HEK293 (cell line): ENCODE measurements at regions of chr17 and their contacts with region 1.

Region 1: GRCh38 chr17:58417300-58418092 is at the start of gene RNF43:
- H3K4me3 ChIP-seq: peak within 1 kb of the TSS; percentile 52
- H3K27ac ChIP-seq: peak within 1 kb of the TSS; percentile 89
- H3K4me1 ChIP-seq: peaks cover 10% of the 10 kb centered on the region
- CTCF ChIP-seq: peak; percentile 98

Region 2: GRCh38 chr17:58324409-58325288 is 92.8 kb before region 1 on chr17:
- CTCF ChIA-PET with region 1: interaction called, 12 read pairs
- POLR2A ChIA-PET with region 1: interaction called, 6 read pairs
- H3K4me3 ChIP-seq: peak overlapping the region; percentile 44
- H3K27ac ChIP-seq: peak overlapping the region; percentile 12; the same call in 1 of the 2 replicates
- H3K4me1 ChIP-seq: no peaks in the 10 kb centered on the region
- CTCF ChIP-seq: no peak

Region 3: DNA sequence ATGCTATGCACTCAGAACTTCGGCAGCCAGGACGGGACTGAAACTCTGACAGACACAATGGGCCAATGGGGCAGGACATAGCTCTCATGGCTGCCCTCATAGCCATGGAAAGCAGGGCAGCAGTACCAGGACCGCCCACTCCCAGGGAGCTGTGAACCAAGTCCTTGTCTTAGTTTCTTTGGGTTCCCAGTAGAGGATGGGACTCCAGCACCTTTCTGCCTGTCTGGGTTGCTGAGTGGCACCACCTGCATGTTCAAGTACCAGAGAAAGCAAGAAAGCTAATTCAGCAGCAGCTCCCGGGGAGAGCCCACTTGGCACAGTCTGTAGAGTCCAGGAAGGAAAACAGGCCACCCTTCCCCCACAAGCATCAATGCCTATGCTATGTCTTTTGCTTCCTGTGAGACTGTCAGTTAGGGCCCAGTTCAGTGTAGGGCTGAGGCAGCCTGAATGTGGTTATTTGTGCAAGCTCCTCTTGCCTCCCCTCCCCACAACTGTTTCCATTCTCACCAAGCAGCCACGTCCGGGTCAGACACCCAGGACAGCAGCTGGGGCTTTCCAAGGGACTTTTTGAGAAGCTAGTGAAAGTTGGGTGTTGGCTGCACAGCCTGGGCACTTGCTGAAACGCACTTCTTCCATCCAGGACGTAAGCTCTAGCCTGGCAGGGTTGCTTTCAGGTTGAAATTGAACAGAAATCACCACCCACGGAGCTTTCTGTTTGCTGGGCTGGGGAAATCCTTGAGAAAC is 73.3 kb before region 1 on chr17:
- CTCF ChIA-PET with region 1: interaction called, 10 read pairs
- POLR2A ChIA-PET with region 1: interaction called, 17 read pairs
- H3K4me3 ChIP-seq: no peak overlapping the region
- H3K27ac ChIP-seq: no peak overlapping the region
- H3K4me1 ChIP-seq: no peaks in the 10 kb centered on the region
- CTCF ChIP-seq: no peak

Region 4: DNA sequence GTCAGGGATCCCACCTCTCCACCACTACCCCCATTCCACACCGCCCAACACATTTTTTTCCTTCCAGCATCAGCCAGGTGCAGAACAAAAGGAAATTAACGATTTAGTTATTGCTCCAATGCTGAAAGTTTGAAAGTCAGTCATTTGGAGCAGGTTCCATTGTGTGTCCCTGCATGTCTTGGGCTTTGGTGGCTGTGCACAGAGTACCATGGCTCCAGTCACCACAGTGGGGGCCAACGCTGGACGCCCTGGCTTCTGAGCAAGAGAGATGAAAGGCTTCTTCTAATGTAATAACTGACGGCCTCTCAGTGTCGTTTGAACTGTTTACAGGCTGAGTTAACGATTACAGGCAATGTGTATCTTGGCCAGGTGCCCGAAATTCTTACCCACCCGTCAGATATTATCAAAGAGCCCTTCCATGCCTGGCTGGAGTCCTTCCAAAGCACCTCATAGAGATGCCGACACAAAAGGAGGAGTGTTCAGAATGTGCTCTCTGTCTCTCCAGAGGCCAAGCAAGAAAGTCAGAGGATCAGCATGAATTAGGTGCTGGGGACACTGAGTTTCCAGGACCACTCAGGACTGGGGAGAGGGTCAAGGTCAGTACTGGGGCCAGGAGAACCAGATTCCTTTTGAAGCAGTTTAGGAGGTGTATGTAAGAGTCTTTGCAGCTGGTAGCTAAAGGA is 26.1 kb before region 1 on chr17:
- CTCF ChIA-PET with region 1: interaction called, 18 read pairs
- POLR2A ChIA-PET with region 1: interaction called, 36 read pairs
- H3K4me3 ChIP-seq: peak overlapping the region; percentile 15
- H3K27ac ChIP-seq: peak overlapping the region; percentile 59
- H3K4me1 ChIP-seq: peaks cover 44% of the 10 kb centered on the region
- CTCF ChIP-seq: no peak

Region 5: DNA sequence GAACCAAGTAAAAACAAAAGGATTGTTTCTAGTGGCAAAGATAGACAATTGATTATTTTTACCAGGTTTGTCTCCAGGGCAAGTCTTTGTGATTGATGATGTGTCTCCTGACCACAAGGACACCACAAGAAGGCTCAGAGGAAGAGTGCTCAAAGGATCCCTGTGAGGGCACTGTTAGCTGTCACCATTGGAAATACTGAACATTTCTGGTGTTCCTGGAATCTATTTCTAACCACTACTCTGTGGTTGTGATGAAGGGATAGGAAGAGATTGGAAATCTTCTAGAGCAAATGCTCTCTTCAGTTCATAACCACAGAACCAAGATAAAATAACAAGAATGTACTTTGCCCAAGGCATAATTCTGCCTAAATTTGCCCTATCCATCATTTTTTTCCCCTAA is 15.4 kb before region 1 on chr17:
- CTCF ChIA-PET with region 1: interaction called, 11 read pairs
- POLR2A ChIA-PET with region 1: interaction called, 4 read pairs
- H3K4me3 ChIP-seq: no peak overlapping the region
- H3K27ac ChIP-seq: no peak overlapping the region
- H3K4me1 ChIP-seq: peaks cover 41% of the 10 kb centered on the region
- CTCF ChIP-seq: no peak

Region 6: GRCh38 chr17:58427807-58428206 is 10.3 kb after region 1 on chr17:
- CTCF ChIA-PET with region 1: interaction called, 22 read pairs
- POLR2A ChIA-PET with region 1: interaction called, 13 read pairs
- H3K4me3 ChIP-seq: no peak overlapping the region
- H3K27ac ChIP-seq: no peak overlapping the region
- H3K4me1 ChIP-seq: no peaks in the 10 kb centered on the region
- CTCF ChIP-seq: no peak